ENCODE measurements at regions of chr9 and their contacts with region 1.

Region 1: GRCh38 chr9:75088260-75088905 is at the start of gene OSTF1:
- DNase-seq: peak; percentile 89 to 95 (median 95)
- ATAC-seq: peak; percentile 93
- H3K4me3 ChIP-seq: peak within 1 kb of the TSS; percentile 76
- H3K4me3 Mint-ChIP-seq: peak within 1 kb of the TSS; percentile 89 to 100 (median 99)
- H3K27ac ChIP-seq: peak within 1 kb of the TSS; percentile 92
- H3K27ac Mint-ChIP-seq: peak within 1 kb of the TSS; percentile 91 to 98 (median 94)
- H3K4me1 ChIP-seq: peaks cover 29 to 49% of the 10 kb centered on the region in 2 donors
- H3K4me1 Mint-ChIP-seq: peaks cover 58 to 82% (median 78%) of the 10 kb centered on the region in 7 donors
- H3K27me3 ChIP-seq: no peaks in the 10 kb centered on the region
- H3K27me3 Mint-ChIP-seq: no peaks in the 10 kb centered on the region
- total RNA-seq, gene OSTF1: 38.7 to 93.5 (median 46.2) TPM

Region 2: GRCh38 chr9:73149371-73150067 is 1938.9 kb before region 1 on chr9:
- CTCF ChIA-PET with region 1: no interaction called
- POLR2A ChIA-PET with region 1: no interaction called
- intact Hi-C with region 1: loop called in 1 of 2 experiments (anchors 10 kb)
- DNase-seq: peak in 1 of 9 donors; percentile 57
- ATAC-seq: peak; percentile 49
- H3K4me3 ChIP-seq: peak overlapping the region; percentile 17
- H3K4me3 Mint-ChIP-seq: peak overlapping the region in 9 of 10 donors; percentile 8 to 79 (median 60)
- H3K27ac ChIP-seq: peak overlapping the region; percentile 32
- H3K27ac Mint-ChIP-seq: peak overlapping the region; percentile 71 to 96 (median 78)
- H3K4me1 ChIP-seq: peaks cover 28 to 32% of the 10 kb centered on the region in 2 donors
- H3K4me1 Mint-ChIP-seq: peaks cover 34 to 80% (median 54%) of the 10 kb centered on the region in 7 donors
- H3K27me3 ChIP-seq: no peaks in the 10 kb centered on the region
- H3K27me3 Mint-ChIP-seq: peaks cover 0 to 2% (median 0%) of the 10 kb centered on the region in 5 donors

Region 3: DNA sequence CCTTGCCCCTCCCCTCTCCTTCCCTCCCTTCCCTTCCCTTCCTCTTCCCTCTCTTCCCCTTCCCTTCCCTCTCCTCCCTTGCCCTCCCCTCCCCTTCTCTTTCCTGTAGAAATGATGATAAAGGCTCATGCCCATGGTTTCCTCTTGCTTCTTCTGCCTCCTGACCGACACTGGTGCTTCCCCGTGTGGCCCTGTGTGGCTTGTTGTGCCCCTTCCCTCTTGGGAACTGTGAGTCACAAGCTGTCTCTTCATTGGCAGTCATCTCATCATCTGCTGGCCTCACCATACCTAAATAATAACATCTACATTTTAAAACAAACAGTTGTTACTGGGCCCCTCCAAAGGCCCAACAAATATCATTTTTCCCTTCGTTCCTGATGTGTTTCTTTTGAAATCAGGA is 48.6 kb before region 1 on chr9:
- CTCF ChIA-PET with region 1: no interaction called
- POLR2A ChIA-PET with region 1: no interaction called
- intact Hi-C with region 1: no loop called
- DNase-seq: no peak
- ATAC-seq: no peak
- H3K4me3 ChIP-seq: no peak overlapping the region
- H3K4me3 Mint-ChIP-seq: no peak overlapping the region
- H3K27ac ChIP-seq: no peak overlapping the region
- H3K27ac Mint-ChIP-seq: no peak overlapping the region
- H3K4me1 ChIP-seq: no peaks in the 10 kb centered on the region
- H3K4me1 Mint-ChIP-seq: no peaks in the 10 kb centered on the region
- H3K27me3 ChIP-seq: no peaks in the 10 kb centered on the region
- H3K27me3 Mint-ChIP-seq: peaks cover 0 to 13% (median 4%) of the 10 kb centered on the region in 5 donors

Region 4: DNA sequence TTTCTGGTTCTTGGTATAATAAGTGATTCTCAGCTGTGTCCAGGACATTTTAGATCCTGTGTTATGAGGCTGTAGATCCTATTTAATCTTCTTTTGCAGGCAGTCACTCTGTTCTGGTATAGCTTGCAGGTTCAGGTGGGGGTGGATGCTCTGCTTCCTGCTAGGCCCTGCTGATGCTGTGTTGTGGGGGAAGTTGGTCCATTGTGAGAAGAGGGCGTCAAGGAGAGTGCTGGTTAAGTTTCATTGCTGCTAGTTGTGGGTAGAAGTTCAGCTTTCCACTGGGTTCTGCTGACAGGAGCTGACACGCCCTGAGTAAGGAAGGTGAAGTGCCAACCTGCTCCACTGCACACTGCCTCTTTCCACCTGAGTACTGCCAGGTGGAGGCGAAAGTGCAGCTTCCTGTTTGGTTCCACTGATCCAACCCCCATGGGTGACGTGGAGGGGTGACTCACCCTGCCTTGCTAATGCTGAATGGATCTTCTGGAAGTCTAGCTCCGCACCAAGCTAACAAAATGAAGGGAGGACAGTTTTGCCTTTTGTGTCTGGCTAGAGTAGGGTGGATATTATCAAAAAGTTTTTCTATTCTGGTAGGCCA is 16.8 kb before region 1 on chr9:
- CTCF ChIA-PET with region 1: interaction called, 4 read pairs
- POLR2A ChIA-PET with region 1: interaction called, 5 read pairs
- intact Hi-C with region 1: loop called in 1 of 2 experiments (anchors 2 kb)
- DNase-seq: peak in 7 of 9 donors; percentile 20 to 75 (median 35)
- ATAC-seq: peak; percentile 79
- H3K4me3 ChIP-seq: no peak overlapping the region
- H3K4me3 Mint-ChIP-seq: peak overlapping the region in 1 of 10 donors; percentile 13
- H3K27ac ChIP-seq: peak overlapping the region; percentile 25
- H3K27ac Mint-ChIP-seq: peak overlapping the region; percentile 26 to 96 (median 79)
- H3K4me1 ChIP-seq: peaks cover 8 to 10% of the 10 kb centered on the region in 2 donors
- H3K4me1 Mint-ChIP-seq: peaks cover 14 to 35% (median 21%) of the 10 kb centered on the region in 7 donors
- H3K27me3 ChIP-seq: no peaks in the 10 kb centered on the region
- H3K27me3 Mint-ChIP-seq: no peaks in the 10 kb centered on the region

Region 5: DNA sequence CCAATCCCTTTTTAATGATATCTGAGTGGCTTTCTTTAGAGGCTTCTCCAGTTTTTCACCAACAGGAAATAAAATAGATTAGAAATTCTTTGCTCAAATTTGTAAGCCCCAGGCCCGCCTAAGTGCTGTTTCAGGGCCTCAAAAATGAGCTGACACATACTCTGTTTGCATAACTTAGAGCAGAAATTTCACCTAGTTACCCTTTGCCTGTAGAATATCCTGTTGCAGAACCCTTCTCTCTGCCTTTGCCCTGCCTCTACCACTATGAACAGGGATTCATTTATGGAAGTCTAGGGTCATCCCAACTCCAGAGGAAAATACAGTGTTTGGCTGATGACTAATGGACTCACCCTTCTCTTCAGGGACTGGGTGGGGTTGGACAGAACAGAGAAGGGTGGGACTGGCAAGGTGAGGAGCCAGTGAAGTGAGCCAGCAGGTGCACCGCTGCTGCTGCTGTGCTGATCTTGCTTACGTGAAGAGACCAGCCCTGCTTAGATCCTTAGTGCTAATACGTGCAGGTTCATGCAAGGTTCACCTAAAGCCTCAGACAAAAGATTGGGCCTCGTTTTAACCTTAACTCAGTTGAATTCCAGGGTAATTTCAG is 22.7 kb after region 1 on chr9:
- CTCF ChIA-PET with region 1: no interaction called
- POLR2A ChIA-PET with region 1: interaction called, 18 read pairs
- intact Hi-C with region 1: no loop called
- DNase-seq: peak in 1 of 9 donors; percentile 2
- ATAC-seq: peak; percentile 49
- H3K4me3 ChIP-seq: no peak overlapping the region
- H3K4me3 Mint-ChIP-seq: peak overlapping the region in 3 of 10 donors; percentile 23 to 36 (median 27)
- H3K27ac ChIP-seq: no peak overlapping the region
- H3K27ac Mint-ChIP-seq: peak overlapping the region in 3 of 9 donors; percentile 15 to 53 (median 24)
- H3K4me1 ChIP-seq: peaks cover 0 to 3% of the 10 kb centered on the region in 2 donors
- H3K4me1 Mint-ChIP-seq: peaks cover 28 to 73% (median 70%) of the 10 kb centered on the region in 7 donors
- H3K27me3 ChIP-seq: no peaks in the 10 kb centered on the region
- H3K27me3 Mint-ChIP-seq: no peaks in the 10 kb centered on the region

Region 6: GRCh38 chr9:75148561-75148960 is 60.2 kb after region 1 on chr9:
- CTCF ChIA-PET with region 1: interaction called, 4 read pairs
- POLR2A ChIA-PET with region 1: interaction called, 60 read pairs
- intact Hi-C with region 1: loop called (anchors 1 kb)
- DNase-seq: peak in 1 of 9 donors; percentile 32
- ATAC-seq: no peak
- H3K4me3 ChIP-seq: peak overlapping the region; percentile 5
- H3K4me3 Mint-ChIP-seq: peak overlapping the region in 9 of 10 donors; percentile 20 to 88 (median 82)
- H3K27ac ChIP-seq: peak overlapping the region; percentile 47
- H3K27ac Mint-ChIP-seq: peak overlapping the region; percentile 81 to 97 (median 86)
- H3K4me1 ChIP-seq: peaks cover 66 to 69% of the 10 kb centered on the region in 2 donors
- H3K4me1 Mint-ChIP-seq: peaks cover 47 to 96% (median 86%) of the 10 kb centered on the region in 7 donors
- H3K27me3 ChIP-seq: no peaks in the 10 kb centered on the region
- H3K27me3 Mint-ChIP-seq: no peaks in the 10 kb centered on the region

Region 7: GRCh38 chr9:75185585-75186170 is 97.3 kb after region 1 on chr9:
- CTCF ChIA-PET with region 1: interaction called, 5 read pairs
- POLR2A ChIA-PET with region 1: interaction called, 11 read pairs
- intact Hi-C with region 1: loop called (anchors 1 to 5 kb)
- DNase-seq: peak in 7 of 9 donors; percentile 10 to 38 (median 25)
- ATAC-seq: peak; percentile 74
- H3K4me3 ChIP-seq: no peak overlapping the region
- H3K4me3 Mint-ChIP-seq: peak overlapping the region in 3 of 10 donors; percentile 20 to 36 (median 25)
- H3K27ac ChIP-seq: no peak overlapping the region
- H3K27ac Mint-ChIP-seq: peak overlapping the region in 2 of 9 donors; percentile 30 to 81
- H3K4me1 ChIP-seq: peaks cover 12 to 13% of the 10 kb centered on the region in 2 donors
- H3K4me1 Mint-ChIP-seq: peaks cover 8 to 32% (median 28%) of the 10 kb centered on the region in 7 donors
- H3K27me3 ChIP-seq: no peaks in the 10 kb centered on the region
- H3K27me3 Mint-ChIP-seq: no peaks in the 10 kb centered on the region

Region 8: GRCh38 chr9:76458903-76459690 is 1370.7 kb after region 1 on chr9 and contains the start of gene GCNT1:
- CTCF ChIA-PET with region 1: no interaction called
- POLR2A ChIA-PET with region 1: no interaction called
- intact Hi-C with region 1: loop called (anchors 2 to 5 kb)
- DNase-seq: peak; percentile 78 to 98 (median 86)
- ATAC-seq: peak; percentile 98
- H3K4me3 ChIP-seq: peak within 1 kb of the TSS; percentile 92
- H3K4me3 Mint-ChIP-seq: peak within 1 kb of the TSS; percentile 81 to 96 (median 92)
- H3K27ac ChIP-seq: no peak within 1 kb of the TSS
- H3K27ac Mint-ChIP-seq: peak within 1 kb of the TSS in 8 of 9 donors; percentile 7 to 81 (median 61)
- H3K4me1 ChIP-seq: peaks cover 3 to 11% of the 10 kb centered on the region in 2 donors
- H3K4me1 Mint-ChIP-seq: peaks cover 16 to 34% (median 20%) of the 10 kb centered on the region in 7 donors
- H3K27me3 ChIP-seq: no peaks in the 10 kb centered on the region
- H3K27me3 Mint-ChIP-seq: peaks cover 0 to 3% (median 0%) of the 10 kb centered on the region in 5 donors
- total RNA-seq, gene GCNT1: 1.4 to 8.9 (median 1.7) TPM